OCI-LY7 (cell line): ENCODE measurements at regions of chr9 and their contacts with region 1.

Region 1: DNA sequence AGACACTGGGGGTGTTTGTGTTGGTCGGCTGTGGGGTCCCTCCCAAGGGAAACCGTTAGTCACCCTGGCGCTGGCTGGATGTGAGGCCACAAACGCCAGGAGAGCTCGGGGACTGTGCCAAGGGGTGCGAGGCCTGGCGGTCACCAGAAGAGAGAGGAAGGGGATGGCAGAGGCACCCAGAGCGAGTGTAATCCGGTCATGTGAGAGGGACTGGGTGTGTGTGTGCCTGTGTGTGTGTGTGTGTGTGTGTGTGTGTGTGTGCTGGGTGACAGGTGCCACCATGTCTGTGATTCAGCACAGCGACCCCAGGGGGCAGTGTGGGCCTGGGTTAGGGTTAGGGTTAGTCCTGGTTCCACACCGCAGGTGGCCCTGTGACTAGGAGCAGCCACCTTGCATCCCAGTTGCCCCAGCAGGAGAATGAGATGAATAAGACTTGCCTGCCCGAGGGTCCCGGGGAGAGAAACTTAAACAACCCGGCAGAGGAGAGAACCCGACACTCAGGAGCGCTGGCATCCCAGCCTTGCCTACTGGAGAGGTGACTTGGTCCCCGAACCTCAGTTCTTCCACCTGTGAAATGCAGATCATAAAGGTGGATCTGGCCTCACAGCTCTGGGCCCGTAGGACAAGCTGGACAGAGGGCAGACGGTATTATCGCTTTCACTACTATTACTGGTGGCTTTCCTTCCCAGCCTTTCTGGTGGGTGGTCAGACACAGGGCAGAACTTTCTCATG is 1.4 kb upstream of the ADAMTSL2 start:
- DNase-seq: peak; percentile 89
- H3K4me3 ChIP-seq: no peak overlapping the region
- H3K27ac ChIP-seq: no peak overlapping the region
- H3K4me1 ChIP-seq: peaks cover 19% of the 10 kb centered on the region
- CTCF ChIP-seq: peak; percentile 85

Region 2: GRCh38 chr9:133470427-133470924 is 62.6 kb before region 1 on chr9:
- CTCF ChIA-PET with region 1: no interaction called
- POLR2A ChIA-PET with region 1: no interaction called
- intact Hi-C with region 1: no loop called
- DNase-seq: no peak
- H3K4me3 ChIP-seq: no peak overlapping the region
- H3K27ac ChIP-seq: peak overlapping the region; percentile 1
- H3K4me1 ChIP-seq: no peaks in the 10 kb centered on the region
- CTCF ChIP-seq: 0 out of 2 replicates have a peak, but pooled peaks have one; percentile 21

Region 3: GRCh38 chr9:133589454-133590227 is 56.5 kb after region 1 on chr9:
- CTCF ChIA-PET with region 1: no interaction called
- POLR2A ChIA-PET with region 1: no interaction called
- intact Hi-C with region 1: loop called (anchors 5 kb)
- DNase-seq: peak; percentile 66
- H3K4me3 ChIP-seq: no peak overlapping the region
- H3K27ac ChIP-seq: no peak overlapping the region
- H3K4me1 ChIP-seq: peaks cover 26% of the 10 kb centered on the region
- CTCF ChIP-seq: peak; percentile 93

Region 4: DNA sequence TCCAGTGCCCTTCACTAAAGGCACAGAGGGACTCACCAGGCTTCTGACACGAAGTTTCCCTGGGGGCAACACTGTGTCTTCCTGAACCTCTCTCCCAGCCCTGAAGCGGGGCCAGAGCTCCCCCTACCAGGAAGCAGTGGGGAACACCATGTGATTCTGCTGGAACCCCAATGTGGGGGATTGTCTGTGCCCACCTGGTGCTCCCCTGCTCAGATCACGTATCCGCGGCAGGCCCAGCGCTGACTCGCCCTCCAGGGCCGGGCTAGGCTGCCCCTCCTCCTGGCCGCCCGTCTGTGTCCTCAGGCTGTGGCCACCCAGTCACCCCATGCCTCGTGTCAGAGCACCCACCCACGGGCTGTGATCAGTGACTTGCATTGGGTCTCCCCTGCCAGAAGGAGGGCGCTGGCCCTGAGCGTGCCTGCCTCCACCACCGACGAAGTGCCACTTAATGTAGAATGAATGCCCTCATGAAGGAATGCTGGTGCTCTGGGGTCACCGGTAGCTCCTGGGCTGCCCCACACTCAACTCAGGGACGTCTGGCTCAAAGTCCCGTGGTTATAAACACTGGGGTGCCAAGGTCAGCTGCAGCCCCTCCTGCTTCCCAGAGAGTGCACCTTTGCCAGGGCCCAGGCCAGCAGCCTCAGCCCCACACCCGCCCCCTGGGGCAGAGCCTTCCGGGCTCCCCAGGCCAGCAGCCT is 182.9 kb after region 1 on chr9:
- CTCF ChIA-PET with region 1: interaction called, 3 read pairs
- POLR2A ChIA-PET with region 1: no interaction called
- intact Hi-C with region 1: loop called (anchors 1 kb)
- DNase-seq: peak; percentile 75
- H3K4me3 ChIP-seq: no peak overlapping the region
- H3K27ac ChIP-seq: no peak overlapping the region
- H3K4me1 ChIP-seq: peaks cover 19% of the 10 kb centered on the region
- CTCF ChIP-seq: peak; percentile 94

Region 5: DNA sequence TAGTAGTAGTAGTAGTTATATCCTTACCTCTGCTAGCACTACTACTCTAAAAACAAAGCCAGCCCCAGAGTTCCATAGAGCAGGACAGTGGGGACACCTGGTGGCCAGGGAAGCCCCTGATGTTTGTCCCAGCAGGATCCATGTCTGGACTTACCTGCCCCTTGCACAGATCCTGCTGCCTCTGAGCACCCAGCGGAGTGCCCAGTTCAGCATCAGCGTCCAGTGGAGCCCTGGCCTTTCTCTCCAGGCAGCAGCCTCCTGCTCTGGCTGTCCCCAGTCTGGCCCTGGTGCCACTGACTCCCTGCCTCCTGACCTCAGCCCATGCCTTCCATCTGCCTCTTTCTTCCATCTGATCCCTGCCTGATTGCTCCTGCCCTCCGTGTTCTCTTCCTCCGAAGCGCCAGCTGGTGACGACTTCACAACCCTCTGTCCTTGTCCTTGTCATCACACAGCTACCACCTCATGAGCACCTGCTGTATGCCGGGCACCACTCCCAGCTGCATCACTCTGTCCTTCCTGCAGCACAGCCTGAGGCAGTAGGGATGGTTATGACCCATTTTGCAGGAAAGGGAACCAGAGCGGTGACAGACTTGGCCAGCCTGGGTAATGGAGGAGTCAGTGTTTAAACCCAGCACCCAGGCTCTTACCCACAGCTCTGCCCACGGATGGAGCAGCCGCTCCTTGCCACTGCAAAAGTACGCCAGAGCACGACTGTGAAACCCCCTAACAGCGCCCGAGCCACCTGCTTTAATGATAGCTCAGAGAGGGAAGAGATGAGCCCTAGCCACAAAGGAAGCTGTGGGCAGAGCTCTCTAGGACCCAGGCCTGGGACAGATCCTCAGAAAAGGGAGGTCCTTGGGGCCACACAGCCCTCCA is 193.5 kb after region 1 on chr9:
- CTCF ChIA-PET with region 1: no interaction called
- POLR2A ChIA-PET with region 1: no interaction called
- intact Hi-C with region 1: loop called (anchors 1 kb)
- DNase-seq: peak; percentile 64
- H3K4me3 ChIP-seq: no peak overlapping the region
- H3K27ac ChIP-seq: no peak overlapping the region
- H3K4me1 ChIP-seq: no peaks in the 10 kb centered on the region
- CTCF ChIP-seq: peak; percentile 73